K562 (cell line): ENCODE measurements at regions of chr6 and their contacts with region 1.

Region 1: DNA sequence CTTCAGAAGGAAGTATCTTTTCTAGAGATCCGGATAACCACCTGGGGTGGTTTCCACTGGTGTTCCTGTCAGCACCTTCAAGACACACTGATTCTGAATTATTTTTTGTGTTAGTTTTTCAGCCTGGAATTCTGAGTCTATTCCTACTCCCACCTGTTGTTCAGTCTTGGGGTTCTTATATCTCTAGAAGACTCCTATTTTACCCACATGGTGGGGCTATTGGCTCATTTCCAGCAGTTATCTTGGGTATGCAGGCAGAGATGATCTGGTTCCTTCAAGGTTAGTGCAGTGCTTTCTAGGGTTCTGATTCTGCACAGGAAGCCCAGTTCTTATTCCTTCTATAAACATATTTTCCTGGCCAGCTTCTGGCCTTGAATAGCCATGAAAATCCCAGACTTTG is 175.6 kb upstream of the PDE7B start:
- DNase-seq: peak; percentile 43 to 67 (median 50)
- ATAC-seq: peak; percentile 87
- H3K4me3 ChIP-seq: no peak overlapping the region
- H3K27ac ChIP-seq: no peak overlapping the region
- H3K4me1 ChIP-seq: no peaks in the 10 kb centered on the region
- H3K27me3 ChIP-seq: peaks cover 0 to 4% of the 10 kb centered on the region in 2 experiments; a peak in 1 of 5 replicates
- CTCF ChIP-seq: peak in 2 of 3 experiments; percentile 54 to 56; a peak in 5 of 6 replicates
- EP300 ChIP-seq: no peak
- POLR2A ChIP-seq: no peak
- RAD21 ChIP-seq: peak; percentile 57 to 80

Region 2: GRCh38 chr6:135895231-135895911 is 219.5 kb after region 1 on chr6:
- CTCF ChIA-PET with region 1: no interaction called
- POLR2A ChIA-PET with region 1: no interaction called
- in situ Hi-C with region 1: no loop called
- intact Hi-C with region 1: loop called (anchors 10 kb)
- DNase-seq: no peak
- ATAC-seq: no peak
- H3K4me3 ChIP-seq: no peak overlapping the region
- H3K27ac ChIP-seq: no peak overlapping the region
- H3K4me1 ChIP-seq: no peaks in the 10 kb centered on the region
- H3K27me3 ChIP-seq: no peaks in the 10 kb centered on the region
- CTCF ChIP-seq: no peak
- EP300 ChIP-seq: no peak
- POLR2A ChIP-seq: no peak
- RAD21 ChIP-seq: no peak